Motor neuron (in vitro differentiated cells): ENCODE measurements at regions of chr9 and their contacts with region 1.

Region 1: DNA sequence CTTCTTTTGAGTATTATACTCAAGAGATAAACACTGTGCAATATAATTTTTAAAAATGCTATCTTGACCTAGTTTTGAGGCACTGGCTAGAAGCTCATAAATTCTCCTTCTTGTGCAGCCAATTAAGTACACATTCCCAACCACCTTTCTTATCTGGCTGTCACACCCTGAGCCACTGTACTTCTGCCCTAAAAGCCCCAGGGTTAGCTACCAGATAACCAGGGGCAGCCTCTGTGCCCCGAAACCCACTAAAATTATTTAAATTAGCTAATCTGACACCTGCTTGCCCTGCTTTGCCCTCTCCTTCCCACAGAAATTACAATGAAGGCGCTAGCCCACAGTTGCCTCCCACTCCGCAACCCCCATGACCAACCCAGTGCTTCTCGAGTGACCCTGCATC is 597.3 kb upstream of the TYRP1 start:
- ATAC-seq: no peak
- H3K4me3 ChIP-seq: no peak overlapping the region
- H3K27ac ChIP-seq: no peak overlapping the region
- H3K4me1 ChIP-seq: no peaks in the 10 kb centered on the region

Region 2: DNA sequence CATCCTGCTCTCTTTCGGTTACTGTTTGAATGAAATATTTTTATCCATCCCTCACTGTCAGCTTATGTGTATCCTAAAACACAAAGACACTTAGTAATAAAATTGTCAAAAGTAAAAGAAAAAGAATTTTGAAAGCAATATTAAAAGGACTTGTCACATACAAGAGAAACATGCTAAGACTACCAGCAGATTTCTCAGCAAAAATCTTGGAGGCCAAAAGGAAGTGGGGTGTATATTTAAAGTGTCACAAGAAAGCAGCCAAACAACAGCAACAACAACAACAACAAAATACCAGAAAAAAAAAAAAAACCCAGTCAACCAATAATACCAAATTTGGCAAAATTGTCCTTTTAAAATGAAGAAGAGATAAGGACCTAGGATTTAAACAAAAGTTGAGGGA is 81.4 kb before region 1 on chr9:
- in situ Hi-C with region 1: loop called in 1 of 9 experiments (anchors 25 kb)
- ATAC-seq: no peak
- H3K4me3 ChIP-seq: no peak overlapping the region
- H3K27ac ChIP-seq: no peak overlapping the region
- H3K4me1 ChIP-seq: no peaks in the 10 kb centered on the region